Sigmoid colon (tissue), 7 donors: ENCODE measurements at regions of chr4 and their contacts with region 1.

Region 1: GRCh38 chr4:139715746-139716391 is 50.2 kb downstream of the MGST2 start:
- DNase-seq: no peak
- H3K4me3 ChIP-seq: no peak overlapping the region
- H3K27ac ChIP-seq: no peak overlapping the region
- H3K4me1 ChIP-seq: peaks cover 0 to 26% (median 20%) of the 10 kb centered on the region in 4 donors
- H3K27me3 ChIP-seq: no peaks in the 10 kb centered on the region
- CTCF ChIP-seq: no peak
- EP300 ChIP-seq: no peak
- POLR2A ChIP-seq: no peak

Region 2: GRCh38 chr4:139675651-139676050 is 40.2 kb before region 1 on chr4:
- intact Hi-C with region 1: loop called (anchors 1 kb)
- DNase-seq: no peak
- H3K4me3 ChIP-seq: no peak overlapping the region
- H3K27ac ChIP-seq: no peak overlapping the region
- H3K4me1 ChIP-seq: no peaks in the 10 kb centered on the region
- H3K27me3 ChIP-seq: no peaks in the 10 kb centered on the region
- CTCF ChIP-seq: no peak
- EP300 ChIP-seq: no peak
- POLR2A ChIP-seq: no peak

Region 3: GRCh38 chr4:140052050-140052449 is 336.2 kb after region 1 on chr4:
- intact Hi-C with region 1: no loop called
- DNase-seq: no peak
- H3K4me3 ChIP-seq: no peak overlapping the region
- H3K27ac ChIP-seq: no peak overlapping the region
- H3K4me1 ChIP-seq: peaks cover 0 to 24% (median 23%) of the 10 kb centered on the region in 4 donors
- H3K27me3 ChIP-seq: no peaks in the 10 kb centered on the region
- CTCF ChIP-seq: peak in 2 of 4 experiments; percentile 41 to 47
- EP300 ChIP-seq: no peak
- POLR2A ChIP-seq: no peak